Adrenal gland (tissue), 19 donors: ENCODE measurements at regions of chr17 and their contacts with region 1.

Region 1: DNA sequence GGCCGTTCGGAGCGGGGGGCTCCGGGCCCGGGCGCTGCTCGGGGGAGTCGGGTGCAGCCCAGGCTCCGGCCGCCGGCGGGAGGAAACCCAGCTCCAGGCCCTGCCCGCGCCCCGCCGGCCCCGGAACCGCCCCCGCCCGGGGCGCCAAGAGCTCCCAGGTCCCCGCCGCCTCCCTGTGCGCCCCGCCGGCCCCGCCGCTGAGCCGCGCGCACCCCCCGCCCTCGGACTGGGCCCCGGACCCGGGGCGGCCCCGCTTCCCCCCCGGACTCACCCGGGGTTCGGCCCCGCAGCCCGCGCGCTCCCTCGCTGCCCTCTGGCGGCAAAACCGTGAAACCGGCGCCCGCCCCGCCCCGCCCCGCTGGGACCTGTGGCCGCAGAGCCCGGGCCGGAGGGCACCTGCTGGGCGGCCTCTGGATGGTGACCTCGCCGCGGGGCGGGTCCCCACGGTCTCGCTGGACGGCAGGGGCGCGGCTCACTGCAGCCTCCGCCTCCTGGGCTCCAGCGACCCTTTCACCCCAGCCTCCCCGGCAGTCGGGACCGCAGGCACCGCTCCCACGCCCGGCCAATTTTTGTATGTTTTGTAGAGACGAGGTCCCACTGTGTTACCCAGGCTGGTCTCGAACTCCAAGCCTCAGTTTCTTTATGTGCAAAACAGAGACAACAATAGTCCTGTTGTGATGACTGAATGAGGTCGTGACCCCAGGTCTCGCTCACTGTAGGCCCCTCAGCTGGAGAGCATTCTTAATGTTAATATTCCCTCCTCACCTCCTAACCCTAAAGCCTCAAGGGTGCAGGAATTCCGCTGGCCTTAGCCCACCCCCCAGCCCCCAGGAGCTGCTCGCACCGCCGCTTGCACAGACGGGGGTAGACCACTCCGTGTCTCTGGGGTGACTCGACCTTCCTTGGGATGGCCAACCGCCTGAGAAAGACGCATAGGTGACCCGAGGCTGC is 33.6 kb upstream of the RPH3AL start:
- DNase-seq: peak; percentile 74 to 89 (median 77)
- H3K4me3 ChIP-seq: peak overlapping the region in 2 of 4 donors; percentile 25 to 91
- H3K27ac ChIP-seq: peak overlapping the region in 4 of 5 donors; percentile 17 to 92 (median 64)
- H3K4me1 ChIP-seq: peaks cover 7 to 21% of the 10 kb centered on the region in 2 donors
- H3K27me3 ChIP-seq: no peaks in the 10 kb centered on the region
- CTCF ChIP-seq: peak; percentile 13 to 91 (median 62)
- POLR2A ChIP-seq: no peak

Region 2: DNA sequence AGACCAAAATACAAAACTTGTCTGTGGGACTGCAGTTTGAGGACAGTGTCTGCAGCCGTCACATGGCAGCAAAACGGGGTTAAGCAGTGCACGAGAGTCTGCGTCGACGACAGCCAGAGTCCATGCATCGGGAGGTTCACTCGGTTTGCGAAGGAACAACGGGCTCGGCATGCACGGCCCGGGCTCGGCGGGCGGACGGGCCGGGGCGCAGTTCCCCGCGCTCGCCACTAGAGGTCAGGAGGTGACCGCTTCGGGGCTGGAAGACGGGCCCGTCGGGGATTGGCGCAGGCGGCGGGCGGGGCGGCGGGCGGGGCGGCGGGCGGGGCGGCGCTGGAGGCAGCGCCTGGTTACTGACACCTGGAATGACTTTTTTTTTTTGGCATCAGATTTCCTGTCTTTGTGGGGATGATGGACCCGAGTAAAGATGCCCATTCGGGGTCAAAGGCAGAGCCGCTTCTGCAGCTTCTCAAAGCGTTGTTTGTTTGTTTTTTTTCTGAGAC is 242.4 kb before region 1 on chr17:
- intact Hi-C with region 1: loop called in 1 of 2 experiments (anchors 2 kb)
- DNase-seq: peak; percentile 74 to 89 (median 81)
- H3K4me3 ChIP-seq: no peak overlapping the region
- H3K27ac ChIP-seq: no peak overlapping the region
- H3K4me1 ChIP-seq: no peaks in the 10 kb centered on the region
- H3K27me3 ChIP-seq: no peaks in the 10 kb centered on the region
- CTCF ChIP-seq: peak; percentile 66 to 98 (median 90)
- POLR2A ChIP-seq: no peak

Region 3: GRCh38 chr17:164303-165235 is 221.6 kb before region 1 on chr17:
- intact Hi-C with region 1: loop called (anchors 5 kb)
- DNase-seq: peak; percentile 52 to 85 (median 70)
- H3K4me3 ChIP-seq: no peak overlapping the region
- H3K27ac ChIP-seq: no peak overlapping the region
- H3K4me1 ChIP-seq: no peaks in the 10 kb centered on the region
- H3K27me3 ChIP-seq: no peaks in the 10 kb centered on the region
- CTCF ChIP-seq: peak; percentile 31 to 75 (median 66)
- POLR2A ChIP-seq: no peak

Region 4: DNA sequence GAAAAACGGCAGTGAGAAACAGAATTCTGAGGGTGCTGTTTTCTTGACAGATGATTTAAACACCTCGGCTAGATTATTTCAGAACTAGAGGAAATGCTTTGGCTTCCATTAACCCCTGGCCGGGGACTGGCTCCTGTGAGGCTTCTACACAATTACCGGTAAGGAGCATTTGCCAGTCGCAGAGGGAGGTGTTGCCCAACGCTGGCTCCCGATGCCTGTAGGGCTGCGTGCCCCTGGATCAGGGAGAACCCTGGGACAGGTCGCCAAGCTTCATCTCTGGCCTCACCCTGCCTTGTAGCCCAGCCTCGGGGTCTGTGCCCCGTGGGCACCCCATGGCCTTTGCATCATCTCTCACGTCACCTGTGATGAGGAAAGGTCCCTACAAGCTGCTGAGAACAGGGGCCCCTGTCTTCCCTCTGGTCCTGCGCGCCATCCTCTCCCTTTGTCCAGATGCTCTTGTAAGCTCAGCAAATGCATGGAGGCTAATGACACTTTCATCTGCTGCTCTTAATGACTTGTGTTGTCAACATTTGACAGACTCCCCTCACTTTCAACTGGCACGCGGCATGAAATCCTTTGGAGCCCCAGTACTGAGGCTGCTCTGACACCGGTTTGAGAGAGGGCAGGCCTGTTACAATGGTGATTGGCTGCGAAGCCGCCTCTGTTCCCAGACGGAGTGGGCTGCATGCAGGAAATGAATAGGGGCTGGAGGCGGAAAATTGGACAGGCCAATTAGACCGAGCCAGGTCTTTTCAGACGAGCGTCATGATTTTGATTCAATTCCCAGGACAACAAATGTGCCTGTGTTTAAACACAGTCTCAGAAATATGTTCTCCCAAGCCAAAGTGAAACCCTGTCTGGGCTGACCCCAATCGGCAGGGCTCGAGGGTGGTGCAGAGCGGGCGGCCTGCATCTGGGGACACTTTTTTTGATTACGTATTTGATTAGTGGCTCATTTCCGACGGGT is 119.2 kb before region 1 on chr17:
- intact Hi-C with region 1: no loop called
- DNase-seq: peak; percentile 14 to 81 (median 42)
- H3K4me3 ChIP-seq: no peak overlapping the region
- H3K27ac ChIP-seq: peak overlapping the region in 3 of 5 donors; percentile 0 to 79 (median 69)
- H3K4me1 ChIP-seq: no peaks in the 10 kb centered on the region
- H3K27me3 ChIP-seq: no peaks in the 10 kb centered on the region
- CTCF ChIP-seq: no peak
- POLR2A ChIP-seq: peak in 1 of 2 donors; percentile 14

Region 5: GRCh38 chr17:310111-311010 is 75.8 kb before region 1 on chr17:
- intact Hi-C with region 1: loop called in 1 of 2 experiments (anchors 10 kb)
- DNase-seq: peak in 1 of 7 donors; percentile 9
- H3K4me3 ChIP-seq: no peak overlapping the region
- H3K27ac ChIP-seq: peak overlapping the region in 1 of 5 donors; percentile 36
- H3K4me1 ChIP-seq: peaks cover 0 to 9% of the 10 kb centered on the region in 2 donors
- H3K27me3 ChIP-seq: no peaks in the 10 kb centered on the region
- CTCF ChIP-seq: no peak
- POLR2A ChIP-seq: no peak

Region 6: GRCh38 chr17:350706-351448 is 35.3 kb before region 1 on chr17:
- intact Hi-C with region 1: no loop called
- DNase-seq: peak; percentile 77 to 95 (median 90)
- H3K4me3 ChIP-seq: no peak overlapping the region
- H3K27ac ChIP-seq: peak overlapping the region; percentile 41 to 93 (median 75)
- H3K4me1 ChIP-seq: peaks cover 37 to 68% of the 10 kb centered on the region in 2 donors
- H3K27me3 ChIP-seq: no peaks in the 10 kb centered on the region
- CTCF ChIP-seq: no peak
- POLR2A ChIP-seq: no peak

Region 7: DNA sequence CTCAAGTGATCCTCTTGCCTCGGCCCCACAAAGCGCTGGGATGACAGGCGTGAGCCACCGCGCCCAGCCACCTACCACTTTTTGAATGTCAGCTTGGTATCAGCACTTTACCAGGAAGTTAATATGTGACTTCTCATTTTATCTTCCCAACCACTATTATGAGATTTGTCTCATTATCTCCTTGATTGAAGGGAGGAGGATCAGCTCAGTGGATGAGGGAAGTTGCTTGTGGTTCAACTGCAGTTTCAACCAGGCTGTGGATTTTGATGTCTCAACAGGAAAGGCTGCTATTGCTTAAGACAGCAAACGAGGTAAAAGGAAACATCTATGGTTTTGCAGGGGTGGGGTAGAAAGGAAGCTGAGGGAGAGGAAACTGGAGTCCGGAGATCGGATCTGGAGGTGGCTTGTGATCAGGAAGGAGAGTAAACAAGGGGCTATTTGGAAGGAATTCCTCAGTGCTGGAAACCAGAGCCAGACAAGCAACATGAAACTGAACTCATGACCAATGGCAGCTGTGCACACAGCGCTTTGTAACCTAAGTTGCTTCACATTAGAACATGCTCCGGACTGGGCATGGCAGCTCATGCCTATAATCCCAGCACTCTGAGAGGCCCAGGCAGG is 148.0 kb after region 1 on chr17:
- intact Hi-C with region 1: no loop called
- DNase-seq: peak in 3 of 7 donors; percentile 28 to 59 (median 31)
- H3K4me3 ChIP-seq: no peak overlapping the region
- H3K27ac ChIP-seq: peak overlapping the region in 2 of 5 donors; percentile 10 to 68
- H3K4me1 ChIP-seq: peaks cover 0 to 4% of the 10 kb centered on the region in 2 donors
- H3K27me3 ChIP-seq: no peaks in the 10 kb centered on the region
- CTCF ChIP-seq: no peak
- POLR2A ChIP-seq: no peak